CD4-positive, alpha-beta memory T cell (primary cell): ENCODE measurements at regions of chr11 and their contacts with region 1.

Region 1: DNA sequence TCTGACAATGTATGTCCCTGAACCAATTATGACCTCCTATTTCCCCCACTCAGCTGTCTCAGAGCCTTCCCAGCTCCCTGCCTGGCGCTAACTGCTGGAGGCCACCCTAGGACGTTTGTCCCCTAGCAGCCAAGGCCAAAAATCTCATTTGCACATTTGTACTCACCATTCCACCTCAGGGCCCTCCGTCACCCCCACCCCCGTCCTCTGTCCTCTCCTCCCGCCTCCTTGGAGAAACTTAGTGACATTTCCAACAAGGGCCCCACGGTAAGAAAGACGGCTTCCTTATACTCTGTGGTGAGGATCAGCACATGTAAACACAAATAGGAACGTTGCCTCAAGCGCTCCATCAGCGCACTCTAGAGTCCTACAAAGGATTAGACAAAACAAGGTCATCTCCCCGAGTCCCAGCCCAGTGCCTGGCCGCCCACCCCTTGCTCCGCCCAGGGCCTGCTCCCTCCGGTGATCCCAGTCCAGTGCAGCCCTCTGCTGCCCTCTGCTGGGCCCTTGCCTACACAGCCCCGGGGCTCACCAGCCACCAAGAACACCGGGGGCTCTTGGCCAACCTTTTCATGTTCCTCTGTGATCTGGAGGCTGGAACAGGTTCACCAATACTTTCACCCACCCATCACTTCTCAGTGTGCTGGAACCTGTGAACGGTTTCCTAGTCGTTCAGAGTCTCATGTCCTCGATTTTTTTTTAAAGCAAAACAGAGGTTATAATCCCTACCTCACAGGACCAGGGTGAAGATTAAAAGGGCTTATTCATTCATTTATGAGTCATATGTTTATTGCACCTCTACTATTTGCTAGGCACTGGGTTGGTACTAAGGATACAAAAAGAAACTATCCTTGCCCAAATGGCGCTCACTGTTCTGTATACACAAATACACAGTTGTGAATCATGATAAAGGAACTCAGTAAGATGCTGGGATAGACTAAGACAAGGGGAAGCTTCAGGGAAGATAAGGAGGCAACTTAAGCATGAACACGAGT is 15.3 kb upstream of the CTR9 start:
- DNase-seq: peak; percentile 77 to 83 (median 80)
- H3K4me3 ChIP-seq: no peak overlapping the region
- H3K4me3 Mint-ChIP-seq: peak overlapping the region; percentile 36 to 81 (median 64)
- H3K27ac ChIP-seq: no peak overlapping the region
- H3K27ac Mint-ChIP-seq: peak overlapping the region in 5 of 7 donors; percentile 28 to 70 (median 45)
- H3K4me1 ChIP-seq: peaks cover 10% of the 10 kb centered on the region
- H3K4me1 Mint-ChIP-seq: peaks cover 9 to 26% (median 17%) of the 10 kb centered on the region in 4 donors
- H3K27me3 ChIP-seq: no peaks in the 10 kb centered on the region
- H3K27me3 Mint-ChIP-seq: peaks cover 4 to 9% of the 10 kb centered on the region in 2 donors

Region 2: DNA sequence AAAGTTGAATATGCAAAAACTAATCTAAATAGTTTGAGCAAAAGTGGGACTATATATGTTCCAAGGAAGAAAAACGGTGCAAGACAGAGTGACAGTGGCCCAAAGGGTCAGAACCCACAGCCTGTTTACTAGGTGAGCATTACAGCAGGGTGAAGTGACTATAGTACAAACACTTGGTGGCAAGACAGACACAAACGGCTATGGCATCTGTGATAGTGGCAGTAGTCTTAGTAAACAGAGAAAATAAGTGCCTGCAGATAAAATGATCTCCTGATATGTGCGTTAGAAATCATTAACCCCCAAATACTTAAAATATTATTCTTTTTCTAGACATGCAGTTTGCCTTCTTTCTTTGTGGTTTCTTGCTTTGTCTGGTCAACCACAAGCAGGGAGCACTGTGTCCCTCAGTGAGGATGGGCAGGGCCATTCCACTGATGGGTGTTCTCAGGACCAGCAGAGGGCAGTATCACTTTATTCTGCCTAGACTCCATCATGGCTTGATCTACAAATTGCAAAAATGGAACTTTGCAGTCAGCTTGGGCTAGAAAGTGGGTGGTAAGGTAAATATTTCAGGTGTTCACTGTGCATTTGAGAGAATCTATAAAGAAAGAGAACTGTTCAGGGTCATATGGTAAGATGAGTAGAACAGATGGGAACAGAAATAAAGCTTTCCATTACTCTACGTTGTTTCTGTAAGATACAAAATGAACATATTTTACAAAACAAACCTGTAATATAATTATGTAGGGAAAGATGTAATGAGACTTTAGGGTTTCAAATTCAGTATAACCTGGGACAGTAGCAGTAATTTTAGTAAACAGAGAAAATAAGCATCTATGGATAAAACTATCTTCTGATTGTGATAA is 873.7 kb before region 1 on chr11:
- CTCF ChIA-PET with region 1: no interaction called
- POLR2A ChIA-PET with region 1: no interaction called
- intact Hi-C with region 1: loop called (anchors 5 kb)
- DNase-seq: peak; percentile 30 to 54 (median 33)
- H3K4me3 ChIP-seq: no peak overlapping the region
- H3K4me3 Mint-ChIP-seq: no peak overlapping the region
- H3K27ac ChIP-seq: no peak overlapping the region
- H3K27ac Mint-ChIP-seq: no peak overlapping the region
- H3K4me1 ChIP-seq: peaks cover 13% of the 10 kb centered on the region
- H3K4me1 Mint-ChIP-seq: peaks cover 12 to 27% (median 17%) of the 10 kb centered on the region in 4 donors
- H3K27me3 ChIP-seq: no peaks in the 10 kb centered on the region
- H3K27me3 Mint-ChIP-seq: no peaks in the 10 kb centered on the region

Region 3: GRCh38 chr11:10405855-10406592 is 329.8 kb before region 1 on chr11:
- CTCF ChIA-PET with region 1: interaction called, 25 read pairs
- POLR2A ChIA-PET with region 1: no interaction called
- intact Hi-C with region 1: loop called (anchors 1 kb)
- DNase-seq: peak in 4 of 5 donors; percentile 49 to 54 (median 51)
- H3K4me3 ChIP-seq: no peak overlapping the region
- H3K4me3 Mint-ChIP-seq: no peak overlapping the region
- H3K27ac ChIP-seq: no peak overlapping the region
- H3K27ac Mint-ChIP-seq: peak overlapping the region in 2 of 7 donors; percentile 32 to 58
- H3K4me1 ChIP-seq: peaks cover 17% of the 10 kb centered on the region
- H3K4me1 Mint-ChIP-seq: peaks cover 19 to 51% (median 25%) of the 10 kb centered on the region in 4 donors
- H3K27me3 ChIP-seq: no peaks in the 10 kb centered on the region
- H3K27me3 Mint-ChIP-seq: no peaks in the 10 kb centered on the region

Region 4: GRCh38 chr11:10514210-10514609 is 221.6 kb before region 1 on chr11:
- CTCF ChIA-PET with region 1: interaction called, 3 read pairs
- POLR2A ChIA-PET with region 1: no interaction called
- intact Hi-C with region 1: loop called (anchors 1 kb)
- DNase-seq: no peak
- H3K4me3 ChIP-seq: no peak overlapping the region
- H3K4me3 Mint-ChIP-seq: no peak overlapping the region
- H3K27ac ChIP-seq: no peak overlapping the region
- H3K27ac Mint-ChIP-seq: peak overlapping the region in 3 of 7 donors; percentile 8 to 89 (median 9)
- H3K4me1 ChIP-seq: no peaks in the 10 kb centered on the region
- H3K4me1 Mint-ChIP-seq: peaks cover 0 to 2% (median under 1%) of the 10 kb centered on the region in 4 donors
- H3K27me3 ChIP-seq: no peaks in the 10 kb centered on the region
- H3K27me3 Mint-ChIP-seq: no peaks in the 10 kb centered on the region

Region 5: DNA sequence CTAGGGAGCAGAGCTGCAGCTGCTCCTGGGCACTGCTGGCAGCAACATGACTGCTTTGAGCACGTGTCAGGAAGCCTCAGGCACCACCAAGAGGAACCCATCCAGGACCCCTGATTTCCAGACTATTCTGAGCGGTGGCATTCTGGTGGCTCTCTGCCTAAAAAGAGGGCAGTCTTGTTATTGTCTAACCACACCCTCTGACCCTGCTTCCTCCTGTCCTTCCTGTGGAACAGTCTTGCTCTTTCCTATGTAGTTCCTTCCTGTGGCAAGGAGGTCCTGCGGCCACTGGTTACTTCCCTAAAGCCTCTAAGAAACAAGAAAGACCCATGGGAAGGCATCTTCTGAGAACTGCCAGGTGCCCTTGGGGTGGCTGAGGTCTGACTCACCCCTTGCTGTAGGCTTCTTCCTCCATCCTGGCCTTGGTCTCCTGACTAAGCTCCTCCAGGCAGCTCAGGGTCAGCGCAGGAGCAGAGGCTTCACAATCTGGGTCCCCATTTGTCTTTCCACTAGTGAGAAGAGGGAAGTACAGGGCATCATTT is 154.2 kb before region 1 on chr11:
- CTCF ChIA-PET with region 1: no interaction called
- POLR2A ChIA-PET with region 1: no interaction called
- intact Hi-C with region 1: no loop called
- DNase-seq: no peak
- H3K4me3 ChIP-seq: no peak overlapping the region
- H3K4me3 Mint-ChIP-seq: no peak overlapping the region
- H3K27ac ChIP-seq: no peak overlapping the region
- H3K27ac Mint-ChIP-seq: no peak overlapping the region
- H3K4me1 ChIP-seq: no peaks in the 10 kb centered on the region
- H3K4me1 Mint-ChIP-seq: no peaks in the 10 kb centered on the region
- H3K27me3 ChIP-seq: no peaks in the 10 kb centered on the region
- H3K27me3 Mint-ChIP-seq: peaks cover 3 to 6% of the 10 kb centered on the region in 2 donors